OCI-LY7 (cell line): ENCODE measurements at regions of chr7 and their contacts with region 1.

Region 1: DNA sequence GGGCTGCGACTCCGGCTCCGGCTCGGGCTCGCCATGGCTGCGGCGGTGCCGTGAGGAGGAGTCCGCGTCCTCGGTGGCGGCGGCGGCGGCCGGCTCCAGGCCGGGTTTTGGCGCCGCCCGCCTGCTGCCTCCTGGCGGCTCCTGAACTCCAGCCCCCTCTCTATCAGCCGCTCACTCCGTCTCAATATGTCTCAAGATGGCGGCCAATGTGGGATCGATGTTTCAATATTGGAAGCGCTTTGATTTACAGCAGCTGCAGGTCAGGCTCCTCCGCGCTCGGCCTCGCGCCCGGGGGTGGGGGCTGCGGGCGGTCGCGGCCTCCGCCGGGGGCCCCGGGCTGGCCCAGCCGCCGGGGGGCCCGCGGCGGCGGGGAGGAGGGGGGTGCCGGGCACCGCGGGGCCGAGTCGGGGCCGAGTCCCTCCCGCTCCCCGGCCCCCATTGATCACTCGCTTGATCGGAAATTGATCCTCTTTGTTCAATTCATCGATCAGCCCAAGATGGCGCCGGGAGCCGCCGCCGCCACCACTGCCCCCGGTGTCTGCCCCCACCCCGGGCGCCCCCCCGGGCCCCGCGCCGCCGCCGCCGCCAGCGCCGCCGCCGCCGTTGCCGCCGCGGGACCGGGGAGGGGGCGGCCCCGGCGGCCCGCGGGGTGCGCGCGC is 1.5 kb upstream of the CUX1 start:
- DNase-seq: peak; percentile 90
- H3K4me3 ChIP-seq: peak overlapping the region; percentile 70
- H3K27ac ChIP-seq: peak overlapping the region; percentile 48
- H3K4me1 ChIP-seq: peaks cover 51% of the 10 kb centered on the region
- CTCF ChIP-seq: no peak

Region 2: DNA sequence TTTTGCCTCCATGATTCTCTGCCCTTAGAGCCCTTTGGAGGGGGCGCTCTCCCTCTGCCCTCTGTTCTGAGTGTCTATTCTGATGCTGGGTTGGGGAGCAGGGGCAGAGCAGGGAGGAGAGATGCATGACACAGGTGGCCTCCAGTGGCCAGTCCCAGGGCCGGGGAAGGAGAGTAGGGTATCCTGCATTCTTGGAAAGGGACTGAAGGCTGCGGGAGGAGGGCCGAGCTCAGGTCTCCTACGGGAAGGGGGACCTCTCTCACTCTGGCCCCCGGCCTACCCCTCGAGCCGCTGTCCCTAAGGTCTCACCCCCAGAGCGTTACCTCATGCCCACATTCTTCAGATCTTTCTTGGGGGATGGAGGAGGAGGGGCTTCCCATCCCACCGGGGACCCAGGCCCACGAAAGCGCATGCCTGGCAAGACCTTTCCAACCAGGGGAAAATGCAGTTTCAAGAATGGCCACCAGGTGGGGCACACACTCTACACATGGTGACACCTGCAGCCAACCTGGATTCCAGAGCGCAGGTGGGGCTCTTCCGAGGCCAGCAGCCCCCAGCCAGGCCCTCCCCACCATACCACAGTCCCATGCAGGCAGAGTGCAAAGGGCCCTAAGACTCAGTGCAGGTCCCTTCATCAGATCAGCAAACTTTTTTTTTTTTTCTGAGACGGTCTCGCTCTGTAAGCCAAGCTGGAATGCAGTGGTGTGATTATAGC is 273.3 kb before region 1 on chr7:
- CTCF ChIA-PET with region 1: no interaction called
- POLR2A ChIA-PET with region 1: no interaction called
- intact Hi-C with region 1: loop called (anchors 2 kb)
- DNase-seq: peak; percentile 76
- H3K4me3 ChIP-seq: no peak overlapping the region
- H3K27ac ChIP-seq: no peak overlapping the region
- H3K4me1 ChIP-seq: no peaks in the 10 kb centered on the region
- CTCF ChIP-seq: peak; percentile 92

Region 3: DNA sequence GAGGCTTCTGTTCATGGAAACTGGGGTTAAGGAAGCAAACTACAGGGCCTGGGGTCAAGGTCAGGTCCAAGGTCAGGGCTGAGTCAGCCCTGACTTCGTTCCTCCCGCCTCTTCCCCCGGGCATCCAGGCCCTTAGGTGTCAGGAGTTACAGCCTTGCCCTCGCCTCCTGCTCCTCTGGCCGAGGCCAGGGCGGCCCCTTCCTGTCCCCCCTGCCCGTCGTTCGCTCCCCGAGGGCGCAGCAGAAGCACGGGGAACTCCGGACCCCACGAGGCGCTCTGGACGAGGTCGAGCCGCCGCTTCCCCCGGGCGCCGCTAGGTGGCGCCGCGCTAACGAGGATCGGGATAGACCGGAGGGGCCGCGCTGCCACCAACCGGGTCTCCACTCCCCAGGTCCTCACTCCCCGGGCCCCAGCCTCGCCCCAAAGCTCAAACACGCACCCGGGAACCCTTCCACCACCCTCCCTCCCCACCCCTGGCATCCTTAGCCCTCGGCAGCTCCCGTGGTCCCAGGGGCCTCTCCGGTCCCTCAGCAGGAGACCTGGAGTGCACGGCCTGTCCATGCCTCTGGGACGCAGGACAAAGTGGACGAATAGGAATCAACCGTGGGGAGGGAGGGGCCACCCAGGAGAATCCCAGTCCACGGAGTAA is 127.7 kb before region 1 on chr7:
- CTCF ChIA-PET with region 1: no interaction called
- POLR2A ChIA-PET with region 1: no interaction called
- intact Hi-C with region 1: loop called (anchors 1 kb)
- DNase-seq: peak; percentile 88
- H3K4me3 ChIP-seq: peak overlapping the region; percentile 23
- H3K27ac ChIP-seq: peak overlapping the region; percentile 45
- H3K4me1 ChIP-seq: peaks cover 12% of the 10 kb centered on the region
- CTCF ChIP-seq: peak; percentile 92

Region 4: DNA sequence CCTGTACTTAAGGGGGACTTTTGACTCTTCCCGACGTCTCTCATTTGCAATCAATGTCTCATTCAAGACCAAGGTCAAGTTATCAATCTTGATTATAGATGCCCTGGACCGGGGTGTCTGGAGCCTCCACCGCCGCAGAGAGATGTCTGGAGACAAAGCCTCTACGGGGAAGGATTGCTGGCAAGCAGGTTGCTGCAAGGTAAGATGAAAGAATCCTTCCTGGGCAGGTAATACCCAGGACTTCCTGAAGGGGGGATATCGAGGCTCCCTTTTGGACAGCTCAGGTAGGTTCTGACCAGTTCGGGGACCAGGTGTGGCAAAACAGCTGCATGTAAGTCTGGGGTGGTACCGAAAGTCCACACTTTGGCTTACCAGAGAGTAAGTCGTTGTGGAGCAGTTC is 11.0 kb before region 1 on chr7:
- CTCF ChIA-PET with region 1: no interaction called
- POLR2A ChIA-PET with region 1: interaction called, 53 read pairs
- intact Hi-C with region 1: no loop called
- DNase-seq: peak; percentile 72
- H3K4me3 ChIP-seq: peak overlapping the region; percentile 51
- H3K27ac ChIP-seq: peak overlapping the region; percentile 80
- H3K4me1 ChIP-seq: peaks cover 78% of the 10 kb centered on the region
- CTCF ChIP-seq: peak; percentile 71

Region 5: GRCh38 chr7:101862280-101863220 is 46.6 kb after region 1 on chr7:
- CTCF ChIA-PET with region 1: no interaction called
- POLR2A ChIA-PET with region 1: interaction called, 141 read pairs
- intact Hi-C with region 1: no loop called
- DNase-seq: peak; percentile 59
- H3K4me3 ChIP-seq: peak overlapping the region; percentile 74
- H3K27ac ChIP-seq: peak overlapping the region; percentile 97
- H3K4me1 ChIP-seq: peaks cover 100% of the 10 kb centered on the region
- CTCF ChIP-seq: no peak

Region 6: GRCh38 chr7:101936611-101937231 is 120.8 kb after region 1 on chr7:
- CTCF ChIA-PET with region 1: no interaction called
- POLR2A ChIA-PET with region 1: no interaction called
- intact Hi-C with region 1: loop called (anchors 5 kb)
- DNase-seq: peak; percentile 27
- H3K4me3 ChIP-seq: peak overlapping the region; percentile 20
- H3K27ac ChIP-seq: peak overlapping the region; percentile 82
- H3K4me1 ChIP-seq: peaks cover 100% of the 10 kb centered on the region
- CTCF ChIP-seq: no peak

Region 7: DNA sequence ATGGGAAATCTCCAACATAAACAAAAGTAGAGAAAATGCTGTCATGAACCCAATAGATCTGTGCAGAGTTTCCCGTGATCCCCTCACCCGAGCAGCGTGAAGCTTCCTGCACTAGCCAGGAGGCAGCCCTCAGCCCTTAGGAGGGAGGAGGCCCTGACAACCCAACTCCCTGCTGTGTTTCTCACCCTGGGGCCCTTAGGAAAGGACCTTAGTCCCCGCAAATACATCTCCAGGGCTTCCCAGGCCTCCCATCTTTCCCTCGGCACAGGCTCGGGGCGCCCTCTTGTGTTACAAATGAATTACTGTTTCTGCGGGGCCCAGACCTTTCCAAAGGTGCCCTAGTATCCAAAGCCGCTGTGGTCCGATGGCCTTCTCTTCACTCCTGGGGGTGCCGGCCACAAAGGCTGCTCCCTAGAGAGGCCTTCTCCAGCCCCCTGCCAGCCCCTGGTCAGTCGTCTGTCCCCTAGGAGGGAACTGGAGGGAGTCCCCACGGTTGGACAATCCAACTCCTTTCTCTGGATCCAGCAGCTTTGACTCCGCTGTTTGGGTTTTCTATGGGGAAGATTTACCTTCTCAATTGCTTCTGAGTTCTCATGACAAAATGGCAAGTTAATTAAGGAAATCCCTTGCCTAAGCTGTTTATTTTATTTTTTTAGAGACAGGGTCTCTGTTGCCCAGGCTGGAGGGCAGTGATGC is 420.8 kb after region 1 on chr7:
- CTCF ChIA-PET with region 1: no interaction called
- POLR2A ChIA-PET with region 1: no interaction called
- intact Hi-C with region 1: loop called (anchors 1 kb)
- DNase-seq: peak; percentile 57
- H3K4me3 ChIP-seq: no peak overlapping the region
- H3K27ac ChIP-seq: no peak overlapping the region
- H3K4me1 ChIP-seq: peaks cover 10% of the 10 kb centered on the region
- CTCF ChIP-seq: peak; percentile 85

Region 8: DNA sequence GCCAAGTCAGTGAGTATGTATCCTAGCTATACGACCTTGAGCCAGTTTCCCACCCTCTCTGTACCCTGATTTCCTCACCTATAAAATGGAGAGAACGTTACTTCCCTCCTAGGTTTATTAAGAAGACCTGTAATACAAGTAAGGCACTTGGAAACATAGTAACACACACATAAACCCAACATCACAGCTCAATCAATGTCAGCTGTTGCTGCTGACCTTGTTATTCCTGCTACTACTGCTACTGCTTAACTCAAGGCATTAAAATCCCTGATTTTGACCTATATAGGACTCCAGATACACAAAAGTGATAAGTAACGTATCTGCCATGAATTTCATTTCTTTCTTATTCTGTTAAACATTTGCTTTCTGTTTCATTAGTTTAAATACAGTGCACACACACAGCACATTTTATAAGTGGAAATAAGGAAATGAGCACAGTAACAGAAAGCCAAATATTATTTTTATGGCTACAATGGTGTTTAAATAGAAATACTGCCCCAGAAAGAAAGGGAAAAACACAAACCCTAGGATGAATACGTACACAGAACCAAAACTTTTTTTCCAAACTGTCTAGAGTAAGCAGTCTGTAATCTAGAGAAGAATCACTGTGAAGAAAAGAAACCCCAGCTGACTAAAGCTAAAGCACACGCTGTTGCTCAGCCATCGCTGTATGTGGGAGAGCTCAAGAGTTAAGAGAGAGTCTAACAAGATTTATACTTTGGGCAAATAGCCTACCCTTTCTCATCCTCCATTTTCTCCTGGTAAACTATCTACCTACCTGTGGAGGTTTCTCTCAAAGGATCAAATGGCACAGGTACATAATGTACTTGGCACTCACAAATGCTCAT is 1314.0 kb after region 1 on chr7:
- CTCF ChIA-PET with region 1: no interaction called
- POLR2A ChIA-PET with region 1: no interaction called
- intact Hi-C with region 1: no loop called
- DNase-seq: no peak
- H3K4me3 ChIP-seq: no peak overlapping the region
- H3K27ac ChIP-seq: no peak overlapping the region
- H3K4me1 ChIP-seq: no peaks in the 10 kb centered on the region
- CTCF ChIP-seq: no peak